A673 (cell line): ENCODE measurements at regions of chr5 and their contacts with region 1.

Region 1: DNA sequence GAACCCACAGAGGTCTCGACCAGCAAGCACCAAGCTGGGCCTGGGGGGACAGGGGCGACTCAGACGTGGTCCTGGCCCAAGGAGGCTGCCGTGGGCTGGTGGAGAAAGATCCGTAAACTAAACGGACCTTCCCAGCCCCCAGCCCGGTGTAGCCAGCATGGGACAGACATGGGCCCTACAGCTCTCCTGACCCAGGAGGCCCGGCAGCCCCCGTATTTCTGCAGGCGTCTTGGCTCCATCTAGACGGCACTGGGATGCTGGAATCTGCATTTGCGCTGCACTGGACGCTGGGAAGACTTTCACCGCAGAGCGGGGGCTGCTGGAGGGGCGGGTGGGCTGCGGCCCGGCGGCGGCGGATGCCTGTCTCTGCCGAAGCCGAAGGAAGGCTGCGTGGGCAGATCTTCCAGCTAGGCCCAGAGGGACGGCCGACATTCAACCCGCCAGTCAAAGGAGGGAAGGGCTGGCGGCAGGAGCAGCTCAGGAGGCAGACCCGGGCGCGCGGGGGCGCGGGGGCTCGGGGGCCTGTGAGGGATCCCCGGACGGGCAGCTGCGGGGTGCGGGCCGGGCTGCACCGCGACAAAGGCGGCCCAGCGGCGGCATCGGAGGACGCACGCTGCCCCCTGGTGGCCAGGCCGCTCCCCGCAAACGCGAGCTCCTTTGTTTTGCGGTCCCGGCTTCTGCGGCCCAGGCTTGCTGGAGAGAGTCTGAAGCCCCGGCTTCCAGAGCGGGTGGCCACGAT is 266.2 kb downstream of the NSG2 start:
- DNase-seq: peak; percentile 69
- H3K4me3 ChIP-seq: peak overlapping the region; percentile 39
- H3K27ac ChIP-seq: no peak overlapping the region
- H3K4me1 ChIP-seq: no peaks in the 10 kb centered on the region
- H3K27me3 ChIP-seq: no peaks in the 10 kb centered on the region
- CTCF ChIP-seq: peak; percentile 70

Region 2: GRCh38 chr5:174020397-174021296 is 291.1 kb before region 1 on chr5:
- CTCF ChIA-PET with region 1: interaction called, 3 read pairs
- POLR2A ChIA-PET with region 1: no interaction called
- intact Hi-C with region 1: loop called (anchors 5 kb)
- DNase-seq: peak; percentile 54
- H3K4me3 ChIP-seq: no peak overlapping the region
- H3K27ac ChIP-seq: no peak overlapping the region
- H3K4me1 ChIP-seq: no peaks in the 10 kb centered on the region
- H3K27me3 ChIP-seq: peaks cover 26% of the 10 kb centered on the region
- CTCF ChIP-seq: peak; percentile 55

Region 3: GRCh38 chr5:174045470-174046025 is 266.2 kb before region 1 on chr5 and contains the start of gene NSG2:
- CTCF ChIA-PET with region 1: interaction called, 28 read pairs
- POLR2A ChIA-PET with region 1: no interaction called
- intact Hi-C with region 1: loop called (anchors 1 kb)
- DNase-seq: peak; percentile 87
- H3K4me3 ChIP-seq: no peak within 1 kb of the TSS
- H3K27ac ChIP-seq: no peak within 1 kb of the TSS
- H3K4me1 ChIP-seq: no peaks in the 10 kb centered on the region
- H3K27me3 ChIP-seq: peaks cover 3% of the 10 kb centered on the region
- CTCF ChIP-seq: peak; percentile 62
- total RNA-seq, gene NSG2: 0.37 and 0.60 TPM in 2 replicates

Region 4: GRCh38 chr5:174229514-174230370 is 82.0 kb before region 1 on chr5:
- CTCF ChIA-PET with region 1: no interaction called
- POLR2A ChIA-PET with region 1: no interaction called
- intact Hi-C with region 1: no loop called
- DNase-seq: peak; percentile 4
- H3K4me3 ChIP-seq: no peak overlapping the region
- H3K27ac ChIP-seq: no peak overlapping the region
- H3K4me1 ChIP-seq: no peaks in the 10 kb centered on the region
- H3K27me3 ChIP-seq: no peaks in the 10 kb centered on the region
- CTCF ChIP-seq: no peak

Region 5: DNA sequence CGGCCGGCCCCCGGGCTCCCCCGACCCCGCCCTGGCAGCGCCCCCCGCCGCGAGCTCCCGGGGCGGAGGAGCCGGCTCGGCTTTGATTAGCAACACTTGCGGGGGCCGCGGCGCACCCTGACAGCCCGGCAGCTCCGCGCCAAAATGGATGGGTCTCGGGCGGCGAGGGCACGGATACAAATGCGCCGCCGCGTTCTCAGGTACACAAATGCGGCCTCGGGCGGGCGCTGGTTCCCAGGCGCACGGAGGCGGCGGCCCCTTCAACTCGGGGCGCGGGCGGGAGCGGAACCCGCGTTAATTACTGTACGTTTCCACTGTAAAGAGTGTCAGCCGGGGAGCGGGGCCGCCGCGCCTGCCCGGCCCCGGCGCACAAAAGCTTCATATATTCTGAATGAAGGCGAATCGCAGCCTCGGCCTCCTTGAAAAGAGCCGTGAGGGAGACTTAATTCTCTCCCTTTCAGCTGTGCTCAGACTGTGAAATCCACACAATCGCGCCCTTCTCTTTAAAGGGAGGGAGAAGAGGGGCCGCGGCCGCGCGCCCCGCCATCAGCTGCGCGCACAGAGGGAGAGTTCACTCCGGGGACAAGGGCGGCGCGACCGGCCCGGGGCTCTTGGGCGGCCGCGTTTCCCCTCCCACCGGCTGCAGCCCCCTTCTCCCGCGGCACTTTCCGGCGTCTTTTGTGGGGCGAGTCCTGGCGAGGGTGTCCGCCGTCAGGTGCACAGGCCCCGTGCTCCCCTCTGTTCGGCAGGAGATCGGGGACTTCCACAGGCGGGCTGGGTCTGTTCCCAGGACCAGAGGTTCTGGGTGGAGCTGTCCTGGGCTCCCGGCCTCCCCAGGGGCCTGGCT is 439.7 kb after region 1 on chr5:
- CTCF ChIA-PET with region 1: no interaction called
- POLR2A ChIA-PET with region 1: no interaction called
- intact Hi-C with region 1: no loop called
- DNase-seq: peak; percentile 20
- H3K4me3 ChIP-seq: peak overlapping the region; percentile 39
- H3K27ac ChIP-seq: no peak overlapping the region
- H3K4me1 ChIP-seq: no peaks in the 10 kb centered on the region
- H3K27me3 ChIP-seq: peaks cover 46% of the 10 kb centered on the region
- CTCF ChIP-seq: no peak